ENCODE measurements at regions of chr17 and their contacts with region 1.

Region 1: DNA sequence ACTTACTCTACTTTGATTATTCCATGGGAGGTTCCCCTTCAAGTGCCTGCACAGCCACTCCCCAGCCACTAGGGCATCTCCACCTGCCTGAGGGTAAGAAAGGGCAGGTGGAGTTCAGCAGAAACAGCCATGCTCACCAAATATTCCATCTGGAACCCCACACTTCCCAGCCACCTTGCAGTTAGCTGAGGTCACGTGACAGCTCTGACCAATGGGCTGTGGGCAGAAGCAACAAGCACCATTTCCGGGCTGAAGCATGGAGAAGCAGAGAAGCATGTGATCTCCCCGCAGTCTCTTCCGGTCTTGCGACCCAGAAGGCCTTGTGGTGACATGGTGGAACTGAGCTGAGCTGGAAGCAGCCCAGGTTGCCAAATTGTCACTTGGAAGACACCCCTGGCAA is 108.6 kb downstream of the CCT6B start:
- DNase-seq: no peak
- ATAC-seq: peak; percentile 77
- H3K4me3 Mint-ChIP-seq: no peak overlapping the region
- H3K27ac Mint-ChIP-seq: no peak overlapping the region
- H3K4me1 Mint-ChIP-seq: peaks cover 14% of the 10 kb centered on the region
- H3K27me3 Mint-ChIP-seq: peaks cover 8% of the 10 kb centered on the region
- CTCF ChIP-seq: 0 out of 2 replicates have a peak, but pooled peaks have one; percentile 15

Region 2: DNA sequence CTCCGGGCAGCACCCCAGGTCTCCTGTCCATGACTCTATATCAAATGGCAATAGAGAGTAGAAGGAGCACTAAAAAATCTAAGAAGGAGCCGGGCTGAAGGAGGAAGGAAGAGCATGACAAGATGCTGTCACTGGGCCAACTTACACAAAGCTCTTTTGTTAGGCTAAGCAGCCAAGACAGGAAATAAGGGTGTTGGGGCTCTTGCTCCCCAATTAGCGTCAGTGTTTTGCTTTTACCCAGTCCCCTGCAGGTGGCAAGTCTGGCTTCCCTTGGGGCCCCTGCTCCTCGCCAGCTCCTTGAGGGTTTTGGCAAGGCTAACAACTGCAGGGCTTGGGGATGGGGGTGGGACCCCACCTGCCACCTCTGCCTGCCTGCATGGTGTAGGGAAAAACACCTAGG is 11.9 kb before region 1 on chr17:
- CTCF ChIA-PET with region 1: interaction called, 17 read pairs
- POLR2A ChIA-PET with region 1: no interaction called
- DNase-seq: no peak
- ATAC-seq: no peak
- H3K4me3 Mint-ChIP-seq: no peak overlapping the region
- H3K27ac Mint-ChIP-seq: no peak overlapping the region
- H3K4me1 Mint-ChIP-seq: peaks cover 48% of the 10 kb centered on the region
- H3K27me3 Mint-ChIP-seq: peaks cover 6% of the 10 kb centered on the region
- CTCF ChIP-seq: no peak